Left colon (tissue), 2 donors: ENCODE measurements at regions of chr7 and their contacts with region 1.

Region 1: GRCh38 chr7:103307503-103308231 is 10.4 kb downstream of the PMPCB start:
- DNase-seq: no peak
- ATAC-seq: no peak

Region 2: DNA sequence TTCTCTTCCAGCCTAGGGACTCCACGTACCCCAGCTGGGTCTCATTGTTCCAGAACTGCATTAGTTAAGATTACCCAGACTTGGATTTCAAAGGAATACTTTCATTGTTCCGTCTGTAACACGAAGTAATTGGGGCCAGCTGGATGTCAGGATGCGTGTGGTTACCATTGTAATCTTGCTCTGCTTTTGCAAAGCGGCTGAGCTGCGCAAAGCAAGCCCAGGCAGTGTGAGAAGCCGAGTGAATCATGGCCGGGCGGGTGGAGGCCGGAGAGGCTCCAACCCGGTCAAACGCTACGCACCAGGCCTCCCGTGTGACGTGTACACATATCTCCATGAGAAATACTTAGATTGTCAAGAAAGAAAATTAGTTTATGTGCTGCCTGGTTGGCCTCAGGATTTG is 373.9 kb before region 1 on chr7:
- intact Hi-C with region 1: no loop called
- DNase-seq: peak; percentile 20 to 30
- ATAC-seq: no peak

Region 3: DNA sequence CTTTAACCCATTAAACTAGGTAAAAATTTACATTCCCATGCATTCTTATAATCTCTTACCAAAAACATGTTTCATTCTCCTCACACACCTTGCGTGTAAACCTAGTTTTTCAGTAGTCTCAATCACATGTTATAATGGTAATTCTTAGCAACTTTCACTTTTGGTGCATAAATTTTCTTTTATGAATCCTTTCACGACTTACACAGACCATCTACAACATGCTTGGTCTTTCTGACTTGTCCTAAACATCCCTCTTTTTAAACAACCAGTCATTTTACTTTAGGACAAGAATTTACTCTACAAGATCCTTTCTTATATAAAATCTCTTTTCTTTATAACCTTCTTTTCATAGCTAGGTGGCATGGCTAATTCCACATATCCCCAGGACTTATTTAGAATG is 258.8 kb before region 1 on chr7:
- intact Hi-C with region 1: no loop called
- DNase-seq: no peak
- ATAC-seq: no peak

Region 4: GRCh38 chr7:103369430-103369829 is 61.8 kb after region 1 on chr7:
- intact Hi-C with region 1: loop called in 1 of 2 experiments (anchors 10 kb)
- DNase-seq: no peak
- ATAC-seq: no peak

Region 5: GRCh38 chr7:103866919-103867318 is 559.3 kb after region 1 on chr7:
- intact Hi-C with region 1: no loop called
- DNase-seq: no peak
- ATAC-seq: no peak